GM23248 (cell line): ENCODE measurements at regions of chr3 and their contacts with region 1.

Region 1: GRCh38 chr3:142993958-142994442 is 7.4 kb upstream of the U2SURP start:
- DNase-seq: peak; percentile 79
- H3K4me3 ChIP-seq: no peak overlapping the region
- H3K27ac ChIP-seq: no peak overlapping the region
- H3K4me1 ChIP-seq: peaks cover 16% of the 10 kb centered on the region
- H3K27me3 ChIP-seq: no peaks in the 10 kb centered on the region

Region 2: GRCh38 chr3:142595951-142596725 is 397.9 kb before region 1 on chr3 and contains the start of gene PLS1:
- in situ Hi-C with region 1: loop called (anchors 5 kb)
- DNase-seq: peak; percentile 82
- H3K4me3 ChIP-seq: peak within 1 kb of the TSS; percentile 81
- H3K27ac ChIP-seq: no peak within 1 kb of the TSS
- H3K4me1 ChIP-seq: no peaks in the 10 kb centered on the region
- H3K27me3 ChIP-seq: no peaks in the 10 kb centered on the region
- total RNA-seq, gene PLS1: 0.13 and 0.54 TPM in 2 replicates

Region 3: GRCh38 chr3:142828703-142829305 is 165.2 kb before region 1 on chr3:
- in situ Hi-C with region 1: loop called (anchors 5 kb)
- DNase-seq: peak; percentile 86
- H3K4me3 ChIP-seq: no peak overlapping the region
- H3K27ac ChIP-seq: no peak overlapping the region
- H3K4me1 ChIP-seq: no peaks in the 10 kb centered on the region
- H3K27me3 ChIP-seq: no peaks in the 10 kb centered on the region

Region 4: DNA sequence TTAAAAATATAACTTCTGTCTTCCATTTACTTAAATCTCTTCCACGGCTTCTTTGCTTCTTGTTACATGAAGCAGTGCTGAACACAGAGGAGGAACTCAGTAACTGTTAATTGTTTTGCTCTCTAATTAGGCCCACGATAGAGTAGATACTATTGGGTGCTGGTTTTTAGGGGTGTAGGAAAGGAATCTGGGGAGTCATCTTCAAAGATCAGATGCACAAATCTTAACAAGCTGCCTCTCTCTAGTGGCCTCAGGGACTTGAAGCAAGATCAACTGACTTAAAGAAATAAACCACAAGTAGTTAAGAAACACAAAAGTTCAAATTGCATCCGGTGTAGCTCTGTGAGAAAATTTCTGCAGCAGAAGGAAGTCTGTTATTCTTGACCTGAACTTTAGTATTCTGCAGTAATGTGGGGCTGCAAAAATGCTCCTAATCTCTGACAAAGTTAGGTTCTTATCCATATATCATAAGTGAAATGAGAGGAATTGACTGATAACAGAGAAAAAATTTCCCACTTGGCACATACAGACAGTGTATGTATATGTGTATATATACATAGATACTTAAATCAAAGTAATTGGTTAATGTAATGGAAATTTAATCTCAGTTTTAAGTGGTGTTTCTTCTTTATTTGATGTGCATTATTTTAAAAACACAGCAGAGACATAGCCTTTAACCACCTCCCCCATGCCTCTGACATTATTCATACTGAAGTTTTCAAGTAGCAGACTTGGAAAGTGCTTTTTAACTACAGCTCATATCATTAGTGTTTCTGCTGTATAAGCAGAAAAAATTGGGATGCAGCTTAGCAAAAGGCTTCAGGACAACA is 177.4 kb after region 1 on chr3:
- in situ Hi-C with region 1: no loop called
- DNase-seq: peak; percentile 67
- H3K4me3 ChIP-seq: 0 out of 2 replicates have a peak overlapping the region, but pooled peaks have one; percentile 2
- H3K27ac ChIP-seq: no peak overlapping the region
- H3K4me1 ChIP-seq: peaks cover 28% of the 10 kb centered on the region
- H3K27me3 ChIP-seq: no peaks in the 10 kb centered on the region